Vagina (tissue), 2 donors: ENCODE measurements at regions of chr17 and their contacts with region 1.

Region 1: GRCh38 chr17:80082403-80083135 is 18.8 kb upstream of the GAA start:
- DNase-seq: no peak
- H3K4me3 ChIP-seq: peak overlapping the region in 1 of 2 donors; percentile 6
- H3K27ac ChIP-seq: no peak overlapping the region
- H3K4me1 ChIP-seq: no peaks in the 10 kb centered on the region
- H3K27me3 ChIP-seq: no peaks in the 10 kb centered on the region
- CTCF ChIP-seq: peak; percentile 37 to 79 (median 64)
- POLR2A ChIP-seq: no peak

Region 2: GRCh38 chr17:79814975-79815835 is 267.4 kb before region 1 on chr17:
- intact Hi-C with region 1: no loop called
- DNase-seq: no peak
- H3K4me3 ChIP-seq: peak overlapping the region; percentile 18 to 42
- H3K27ac ChIP-seq: no peak overlapping the region
- H3K4me1 ChIP-seq: peaks cover 47% of the 10 kb centered on the region
- H3K27me3 ChIP-seq: peaks cover 35% of the 10 kb centered on the region
- CTCF ChIP-seq: no peak
- POLR2A ChIP-seq: no peak

Region 3: GRCh38 chr17:80008383-80008840 is 74.2 kb before region 1 on chr17:
- intact Hi-C with region 1: loop called (anchors 10 kb)
- DNase-seq: no peak
- H3K4me3 ChIP-seq: no peak overlapping the region
- H3K27ac ChIP-seq: no peak overlapping the region
- H3K4me1 ChIP-seq: peaks cover 11% of the 10 kb centered on the region
- H3K27me3 ChIP-seq: no peaks in the 10 kb centered on the region
- CTCF ChIP-seq: peak; percentile 76 to 94 (median 83)
- POLR2A ChIP-seq: no peak

Region 4: DNA sequence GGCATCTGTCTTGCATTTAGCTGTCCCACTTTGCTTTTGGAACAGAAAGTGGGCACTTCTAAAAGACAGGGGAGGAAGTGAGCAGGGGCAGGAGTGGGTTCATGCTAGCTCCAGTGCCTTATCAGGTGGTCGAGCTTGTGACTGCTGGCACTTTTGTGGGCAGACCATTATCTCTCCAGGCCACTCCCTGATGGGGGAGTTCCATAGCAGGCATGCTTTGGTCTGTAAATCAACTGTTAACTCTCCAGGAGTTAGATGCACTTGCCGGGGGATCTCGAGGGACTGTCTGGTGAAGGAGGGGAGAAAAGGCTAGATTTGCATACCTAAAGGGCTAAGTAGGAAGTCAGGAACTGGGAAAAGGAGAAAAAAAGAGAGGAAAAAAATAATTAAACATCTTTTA is 78.0 kb after region 1 on chr17:
- intact Hi-C with region 1: no loop called
- DNase-seq: no peak
- H3K4me3 ChIP-seq: no peak overlapping the region
- H3K27ac ChIP-seq: no peak overlapping the region
- H3K4me1 ChIP-seq: no peaks in the 10 kb centered on the region
- H3K27me3 ChIP-seq: no peaks in the 10 kb centered on the region
- CTCF ChIP-seq: no peak
- POLR2A ChIP-seq: no peak

Region 5: DNA sequence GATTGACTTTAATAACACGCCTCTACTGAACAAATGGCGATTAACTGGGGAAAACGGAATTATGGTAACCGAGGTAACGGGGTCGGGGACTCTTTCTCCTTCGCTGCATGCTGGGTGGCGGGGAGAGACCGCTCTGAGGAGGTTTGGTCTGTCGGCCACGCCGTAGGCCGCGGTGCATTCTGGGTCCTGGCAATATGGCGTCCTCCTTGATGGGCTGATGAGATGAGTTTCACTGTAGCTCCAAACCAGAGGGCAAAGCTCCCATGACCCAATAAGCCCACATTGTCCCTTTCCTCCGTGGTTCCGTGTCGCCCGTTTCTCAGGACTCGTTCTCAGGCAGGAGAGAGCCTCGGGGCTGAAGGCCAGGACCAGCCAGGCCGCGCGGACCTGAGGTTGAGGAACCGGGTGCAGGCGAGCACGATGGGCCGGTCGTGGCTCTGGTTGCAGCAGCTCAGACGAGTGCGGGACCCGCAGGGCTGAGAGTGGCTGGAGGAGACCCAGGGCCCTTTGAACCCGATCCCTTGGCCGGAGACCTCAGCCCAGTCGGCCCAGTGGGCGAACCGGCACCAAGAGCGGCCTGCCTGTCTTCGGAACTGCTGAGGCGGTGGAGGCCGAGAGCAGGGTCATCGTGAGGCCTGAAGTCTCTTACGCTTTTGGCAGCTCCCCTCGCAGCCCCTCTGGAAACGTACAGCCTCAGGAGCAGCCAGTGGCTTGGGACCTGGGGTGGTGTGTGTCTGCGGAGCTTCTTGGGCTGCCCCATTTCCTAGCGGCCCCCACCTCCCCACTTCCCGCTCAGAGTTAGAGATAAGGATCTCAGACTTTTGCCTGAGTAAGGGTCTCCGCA is 462.3 kb after region 1 on chr17 and contains the start of gene RPTOR:
- intact Hi-C with region 1: no loop called
- DNase-seq: peak in 1 of 2 donors; percentile 90
- H3K4me3 ChIP-seq: peak within 1 kb of the TSS; percentile 83 to 98
- H3K27ac ChIP-seq: peak within 1 kb of the TSS; percentile 76
- H3K4me1 ChIP-seq: peaks cover 28% of the 10 kb centered on the region
- H3K27me3 ChIP-seq: no peaks in the 10 kb centered on the region
- CTCF ChIP-seq: no peak
- POLR2A ChIP-seq: no peak
- total RNA-seq, gene RPTOR: 38.3 TPM